ENCODE measurements at regions of chr2 and their contacts with region 1.

Region 1: GRCh38 chr2:112884869-112885505 is 26.0 kb upstream of the IL37 start:
- DNase-seq: peak; percentile 64
- H3K4me3 Mint-ChIP-seq: no peak overlapping the region
- H3K27ac Mint-ChIP-seq: peak overlapping the region; percentile 47
- H3K4me1 Mint-ChIP-seq: peaks cover 31% of the 10 kb centered on the region
- H3K27me3 Mint-ChIP-seq: peaks cover 11% of the 10 kb centered on the region

Region 2: DNA sequence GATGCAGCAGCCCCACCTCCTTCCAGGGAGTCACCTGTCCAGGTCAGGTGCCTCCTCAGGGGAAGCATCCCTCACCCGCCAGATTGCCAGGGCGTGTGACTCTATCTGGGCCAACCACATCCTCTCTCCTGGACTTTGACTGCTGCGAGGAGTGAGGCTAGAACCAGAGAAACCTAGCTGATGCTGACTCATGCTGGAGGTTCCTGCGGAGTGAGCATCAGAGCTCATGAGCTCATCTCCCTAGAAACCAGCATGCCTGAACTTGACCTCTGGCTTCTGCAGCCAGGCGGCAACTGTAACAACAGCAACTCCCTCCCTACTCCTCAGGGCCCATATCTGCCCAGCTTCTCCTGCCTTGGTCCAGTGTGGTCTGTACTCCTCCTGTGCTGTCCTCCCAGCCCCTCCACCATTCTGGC is 192.5 kb before region 1 on chr2:
- intact Hi-C with region 1: no loop called
- DNase-seq: peak; percentile 73
- H3K4me3 Mint-ChIP-seq: peak overlapping the region; percentile 47
- H3K27ac Mint-ChIP-seq: peak overlapping the region; percentile 89
- H3K4me1 Mint-ChIP-seq: peaks cover 32% of the 10 kb centered on the region
- H3K27me3 Mint-ChIP-seq: no peaks in the 10 kb centered on the region

Region 3: GRCh38 chr2:112749755-112750559 is 135.0 kb before region 1 on chr2:
- intact Hi-C with region 1: loop called (anchors 1 kb)
- DNase-seq: peak; percentile 76
- H3K4me3 Mint-ChIP-seq: peak overlapping the region; percentile 29
- H3K27ac Mint-ChIP-seq: peak overlapping the region; percentile 77
- H3K4me1 Mint-ChIP-seq: peaks cover 58% of the 10 kb centered on the region
- H3K27me3 Mint-ChIP-seq: no peaks in the 10 kb centered on the region

Region 4: DNA sequence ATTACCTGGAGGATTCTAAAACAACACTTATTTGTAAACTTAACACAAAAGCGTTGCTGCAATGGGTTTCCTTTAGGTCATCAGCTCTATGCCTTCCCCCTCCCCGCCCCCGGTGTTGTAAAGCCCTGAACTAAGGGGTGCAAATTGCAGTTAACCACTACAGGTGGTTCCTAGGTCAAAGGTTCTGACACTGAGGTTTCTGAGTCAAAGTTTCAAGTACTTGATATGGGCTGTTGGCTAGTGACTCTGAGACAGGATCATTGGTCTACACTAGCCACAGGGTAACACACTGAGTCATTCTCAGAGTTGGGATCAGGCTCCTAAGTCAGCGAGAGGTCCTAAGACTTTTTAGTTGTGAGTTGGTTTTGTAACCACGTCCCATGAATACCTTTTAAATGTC is 63.8 kb before region 1 on chr2:
- intact Hi-C with region 1: loop called (anchors 1 kb)
- DNase-seq: peak; percentile 38
- H3K4me3 Mint-ChIP-seq: peak overlapping the region; percentile 32
- H3K27ac Mint-ChIP-seq: peak overlapping the region; percentile 79
- H3K4me1 Mint-ChIP-seq: peaks cover 39% of the 10 kb centered on the region
- H3K27me3 Mint-ChIP-seq: peaks cover 3% of the 10 kb centered on the region

Region 5: GRCh38 chr2:112941753-112942658 is 57.0 kb after region 1 on chr2:
- intact Hi-C with region 1: loop called (anchors 1 kb)
- DNase-seq: peak; percentile 65
- H3K4me3 Mint-ChIP-seq: no peak overlapping the region
- H3K27ac Mint-ChIP-seq: no peak overlapping the region
- H3K4me1 Mint-ChIP-seq: peaks cover 9% of the 10 kb centered on the region
- H3K27me3 Mint-ChIP-seq: peaks cover 38% of the 10 kb centered on the region